Caco-2 (cell line): ENCODE measurements at regions of chr17 and their contacts with region 1.

Region 1: GRCh38 chr17:4004517-4005295 is 40.5 kb upstream of the ATP2A3 start:
- DNase-seq: peak; percentile 79 to 83
- H3K4me3 ChIP-seq: no peak overlapping the region; the same call in 1 of the 2 replicates
- H3K4me3 Mint-ChIP-seq: peak overlapping the region; percentile 68
- H3K27ac Mint-ChIP-seq: peak overlapping the region; percentile 95
- H3K4me1 ChIP-seq: peaks cover 12% of the 10 kb centered on the region
- H3K4me1 Mint-ChIP-seq: no peaks in the 10 kb centered on the region
- H3K27me3 ChIP-seq: no peaks in the 10 kb centered on the region
- H3K27me3 Mint-ChIP-seq: no peaks in the 10 kb centered on the region
- CTCF ChIP-seq: peak; percentile 56 to 76

Region 2: GRCh38 chr17:3857121-3858100 is 147.3 kb before region 1 on chr17:
- CTCF ChIA-PET with region 1: no interaction called
- POLR2A ChIA-PET with region 1: no interaction called
- intact Hi-C with region 1: no loop called
- DNase-seq: no peak
- H3K4me3 ChIP-seq: no peak overlapping the region
- H3K4me3 Mint-ChIP-seq: no peak overlapping the region
- H3K27ac Mint-ChIP-seq: no peak overlapping the region
- H3K4me1 ChIP-seq: no peaks in the 10 kb centered on the region
- H3K4me1 Mint-ChIP-seq: no peaks in the 10 kb centered on the region
- H3K27me3 ChIP-seq: no peaks in the 10 kb centered on the region
- H3K27me3 Mint-ChIP-seq: no peaks in the 10 kb centered on the region
- CTCF ChIP-seq: no peak

Region 3: DNA sequence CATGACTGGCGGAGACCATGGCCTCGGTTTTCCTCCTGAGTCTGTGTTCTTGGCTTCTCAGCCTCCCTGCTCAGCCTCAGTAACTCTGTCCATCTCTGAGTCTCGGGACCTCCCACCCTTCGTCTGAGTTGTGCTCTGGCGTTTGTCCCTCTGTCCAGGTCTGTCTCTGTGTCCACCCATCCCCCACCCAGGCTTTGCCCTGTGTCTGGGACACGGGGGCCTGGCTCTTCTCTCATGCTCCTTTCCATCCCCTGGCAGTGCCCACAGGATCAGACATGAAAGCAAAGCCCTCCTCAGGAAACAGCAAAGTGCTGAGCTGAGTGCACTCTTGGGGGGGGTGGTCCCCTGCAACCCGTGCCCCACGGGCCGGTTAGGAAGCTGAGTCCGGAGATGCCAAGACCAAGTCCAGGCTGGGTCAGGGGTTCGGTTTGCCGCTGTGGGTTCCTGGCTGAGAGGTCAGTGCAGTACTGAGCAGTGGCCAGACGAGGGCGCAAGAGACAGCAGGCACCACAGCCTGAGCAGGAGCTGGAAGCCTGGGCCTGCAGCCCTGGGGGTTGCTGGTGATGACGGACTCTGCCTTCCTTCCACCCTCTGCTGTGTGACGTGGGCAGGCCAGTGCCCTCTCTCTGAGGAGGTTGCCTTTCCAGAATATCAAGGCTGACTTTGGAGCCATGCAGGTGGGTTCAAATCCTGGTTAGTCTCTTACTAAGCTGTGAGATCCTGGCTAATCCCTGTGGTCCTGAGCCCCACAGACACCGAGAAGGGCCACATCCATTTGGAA is 91.0 kb before region 1 on chr17:
- CTCF ChIA-PET with region 1: interaction called, 11 read pairs
- POLR2A ChIA-PET with region 1: no interaction called
- intact Hi-C with region 1: loop called (anchors 1 kb)
- DNase-seq: peak; percentile 66 to 73
- H3K4me3 ChIP-seq: no peak overlapping the region
- H3K4me3 Mint-ChIP-seq: no peak overlapping the region
- H3K27ac Mint-ChIP-seq: no peak overlapping the region
- H3K4me1 ChIP-seq: no peaks in the 10 kb centered on the region
- H3K4me1 Mint-ChIP-seq: no peaks in the 10 kb centered on the region
- H3K27me3 ChIP-seq: no peaks in the 10 kb centered on the region
- H3K27me3 Mint-ChIP-seq: no peaks in the 10 kb centered on the region
- CTCF ChIP-seq: peak; percentile 75 to 79

Region 4: GRCh38 chr17:3935140-3935542 is 69.6 kb before region 1 on chr17:
- CTCF ChIA-PET with region 1: interaction called, 7 read pairs
- POLR2A ChIA-PET with region 1: no interaction called
- intact Hi-C with region 1: loop called (anchors 1 kb)
- DNase-seq: peak; percentile 67 to 68
- H3K4me3 ChIP-seq: no peak overlapping the region
- H3K4me3 Mint-ChIP-seq: no peak overlapping the region
- H3K27ac Mint-ChIP-seq: no peak overlapping the region
- H3K4me1 ChIP-seq: no peaks in the 10 kb centered on the region
- H3K4me1 Mint-ChIP-seq: no peaks in the 10 kb centered on the region
- H3K27me3 ChIP-seq: no peaks in the 10 kb centered on the region
- H3K27me3 Mint-ChIP-seq: no peaks in the 10 kb centered on the region
- CTCF ChIP-seq: peak; percentile 31 to 66

Region 5: DNA sequence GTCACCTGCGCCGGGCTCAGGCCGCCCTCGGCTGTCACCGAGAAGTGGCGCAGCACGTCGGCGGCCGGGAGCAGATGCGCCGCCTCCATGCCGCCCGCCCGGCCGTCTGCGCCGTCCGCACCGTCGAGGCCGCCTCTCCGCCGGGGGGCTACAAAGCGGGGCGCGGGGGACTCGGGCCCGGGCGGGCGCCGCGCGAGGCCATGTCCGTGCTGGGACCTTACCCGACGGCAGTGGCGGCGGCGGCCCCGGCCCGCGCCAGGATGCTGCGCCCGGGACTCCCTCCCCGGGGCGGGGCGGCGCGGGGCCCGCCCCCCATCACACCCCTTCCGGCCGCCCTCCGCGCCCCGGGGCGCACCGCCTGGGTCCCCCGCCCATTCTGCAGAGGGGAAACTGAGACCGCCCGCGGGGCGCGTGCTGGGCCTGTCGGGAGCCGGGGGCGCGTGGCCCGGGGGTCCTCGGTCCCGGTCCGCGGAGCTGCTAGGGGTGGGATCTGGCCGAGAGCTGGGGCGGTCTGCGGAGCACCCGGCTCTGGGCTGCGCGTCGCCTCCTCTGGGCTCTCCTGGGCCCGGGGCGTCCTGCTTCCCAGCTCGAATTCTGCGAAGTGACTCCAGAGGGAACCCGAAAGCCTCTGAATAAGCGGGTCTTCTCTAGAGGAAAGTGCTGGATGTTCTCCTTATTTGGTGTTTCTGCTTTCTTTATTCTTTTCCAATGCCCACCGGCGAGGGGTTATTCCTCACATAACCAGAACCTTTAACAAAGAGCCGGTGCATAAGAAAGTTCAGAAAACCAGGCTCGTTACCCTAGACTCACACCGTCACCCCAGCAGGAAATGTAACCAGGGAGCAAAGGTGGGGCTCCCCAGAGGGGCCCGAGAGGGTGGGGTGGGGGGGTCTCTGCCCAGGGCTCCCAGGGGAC is 40.2 kb before region 1 on chr17 and contains the start of gene ATP2A3:
- CTCF ChIA-PET with region 1: interaction called, 7 read pairs
- POLR2A ChIA-PET with region 1: interaction called, 6 read pairs
- intact Hi-C with region 1: loop called (anchors 1 kb)
- DNase-seq: peak in 1 of 2 experiments; percentile 21
- H3K4me3 ChIP-seq: peak within 1 kb of the TSS; percentile 47
- H3K4me3 Mint-ChIP-seq: peak within 1 kb of the TSS; percentile 74
- H3K27ac Mint-ChIP-seq: peak within 1 kb of the TSS; percentile 42
- H3K4me1 ChIP-seq: peaks cover 6% of the 10 kb centered on the region
- H3K4me1 Mint-ChIP-seq: peaks cover under 1% of the 10 kb centered on the region
- H3K27me3 ChIP-seq: no peaks in the 10 kb centered on the region
- H3K27me3 Mint-ChIP-seq: no peaks in the 10 kb centered on the region
- CTCF ChIP-seq: no peak
- total RNA-seq, gene ATP2A3: 8.0 and 8.2 TPM in 2 replicates